ENCODE measurements at regions of chr9 and their contacts with region 1.

Region 1: DNA sequence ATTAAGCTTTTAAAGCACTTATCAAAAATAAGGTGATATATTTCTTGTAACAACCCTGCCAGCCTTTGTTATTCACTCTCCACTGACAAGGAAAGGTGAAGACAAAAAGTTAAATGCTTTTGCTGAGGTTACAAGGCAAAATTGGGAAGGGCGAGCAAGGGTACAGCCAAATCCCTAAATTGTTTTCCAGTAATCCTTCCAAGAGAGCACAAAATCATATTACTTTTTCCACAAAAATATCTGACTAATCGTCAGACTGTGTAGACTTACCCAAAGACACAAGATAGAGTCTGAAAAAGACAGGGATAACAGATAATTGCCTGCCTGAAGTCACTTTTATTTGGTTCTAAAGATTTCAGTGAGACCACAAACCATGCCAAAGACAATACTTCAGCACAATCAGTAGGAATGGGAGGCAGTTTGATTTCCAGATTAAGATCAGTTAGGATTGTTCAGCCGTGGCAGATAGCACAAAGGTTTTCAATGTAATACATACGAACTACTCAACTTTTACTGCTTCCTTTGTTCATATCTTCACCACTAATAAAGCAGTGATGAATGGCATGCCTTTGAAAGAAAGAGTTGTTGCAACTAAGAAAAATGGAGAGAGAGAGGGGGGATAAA is 383.8 kb upstream of the TUSC1 start:
- DNase-seq: no peak
- ATAC-seq: no peak
- H3K4me3 Mint-ChIP-seq: no peak overlapping the region
- H3K27ac Mint-ChIP-seq: no peak overlapping the region
- H3K4me1 Mint-ChIP-seq: no peaks in the 10 kb centered on the region
- H3K27me3 Mint-ChIP-seq: no peaks in the 10 kb centered on the region

Region 2: GRCh38 chr9:26193237-26193636 is 131.2 kb after region 1 on chr9:
- CTCF ChIA-PET with region 1: no interaction called
- POLR2A ChIA-PET with region 1: no interaction called
- intact Hi-C with region 1: loop called in 1 of 2 experiments (anchors 10 kb)
- DNase-seq: no peak
- ATAC-seq: no peak
- H3K4me3 Mint-ChIP-seq: no peak overlapping the region
- H3K27ac Mint-ChIP-seq: no peak overlapping the region
- H3K4me1 Mint-ChIP-seq: no peaks in the 10 kb centered on the region
- H3K27me3 Mint-ChIP-seq: no peaks in the 10 kb centered on the region

Measured in activated CD4-positive, alpha-beta T cell treated with anti-CD3 and anti-CD28 coated beads for 36 hours (primary cell).